Activated T-helper 2 cell treated with anti-CD3 and anti-CD28 coated beads, Interferon-gamma antibody, Interleukin-2, Interleukin-4, amounts not matched to agents 10 μg/mL and 5 μg/mL and 100 μg/mL, durations not matched to agents 14 hours and 24 hours and 36 hours (primary cell): ENCODE measurements at regions of chr9 and their contacts with region 1.

Region 1: DNA sequence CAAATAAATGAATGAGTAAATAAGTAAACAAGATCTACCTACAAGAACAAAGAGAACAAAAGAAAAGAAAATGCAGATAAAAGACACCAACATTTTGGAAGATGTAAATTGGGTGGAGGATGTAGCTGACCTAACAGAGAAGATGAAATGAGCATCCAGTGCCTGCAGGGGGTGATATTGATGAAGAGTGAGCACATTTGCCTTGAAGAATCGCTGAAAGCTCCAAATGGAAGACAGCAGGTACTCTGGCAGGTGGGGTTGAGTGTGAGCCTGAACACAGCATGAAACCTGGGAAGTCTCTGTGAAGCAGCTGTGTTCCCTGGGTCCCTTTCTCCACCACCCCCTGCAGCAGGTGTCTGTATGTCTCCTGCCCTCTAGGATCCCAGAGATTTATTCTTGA is 125.6 kb downstream of the NXNL2 start:
- DNase-seq: no peak
- H3K4me3 Mint-ChIP-seq: no peak overlapping the region
- H3K27ac Mint-ChIP-seq: no peak overlapping the region
- H3K4me1 Mint-ChIP-seq: no peaks in the 10 kb centered on the region
- H3K27me3 Mint-ChIP-seq: peaks cover 4% of the 10 kb centered on the region

Region 2: DNA sequence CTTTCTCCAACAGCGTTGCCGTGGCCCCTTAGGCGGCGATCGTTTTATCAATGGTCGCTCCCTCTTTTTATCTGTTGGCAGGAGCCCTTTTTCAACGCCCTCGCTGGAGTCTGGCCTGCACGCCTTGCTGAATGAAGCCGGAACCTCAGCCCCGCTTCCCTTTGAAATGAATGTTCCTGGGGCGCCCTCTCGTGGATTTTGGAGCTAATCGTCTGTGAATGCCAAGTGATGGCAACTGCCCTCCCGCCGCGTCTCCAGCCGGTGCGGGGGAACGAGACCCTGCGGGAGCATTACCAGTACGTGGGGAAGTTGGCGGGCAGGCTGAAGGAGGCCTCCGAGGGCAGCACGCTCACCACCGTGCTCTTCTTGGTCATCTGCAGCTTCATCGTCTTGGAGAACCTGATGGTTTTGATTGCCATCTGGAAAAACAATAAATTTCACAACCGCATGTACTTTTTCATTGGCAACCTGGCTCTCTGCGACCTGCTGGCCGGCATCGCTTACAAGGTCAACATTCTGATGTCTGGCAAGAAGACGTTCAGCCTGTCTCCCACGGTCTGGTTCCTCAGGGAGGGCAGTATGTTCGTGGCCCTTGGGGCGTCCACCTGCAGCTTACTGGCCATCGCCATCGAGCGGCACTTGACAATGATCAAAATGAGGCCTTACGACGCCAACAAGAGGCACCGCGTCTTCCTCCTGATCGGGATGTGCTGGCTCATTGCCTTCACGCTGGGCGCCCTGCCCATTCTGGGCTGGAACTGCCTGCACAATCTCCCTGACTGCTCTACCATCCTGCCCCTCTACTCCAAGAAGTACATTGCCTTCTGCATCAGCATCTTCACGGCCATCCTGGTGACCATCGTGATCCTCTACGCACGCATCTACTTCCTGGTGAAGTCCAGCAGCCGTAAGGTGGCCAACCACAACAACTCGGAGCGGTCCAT is 340.6 kb after region 1 on chr9:
- intact Hi-C with region 1: loop called (anchors 2 kb)
- DNase-seq: peak; percentile 65
- H3K4me3 Mint-ChIP-seq: no peak overlapping the region
- H3K27ac Mint-ChIP-seq: no peak overlapping the region
- H3K4me1 Mint-ChIP-seq: peaks cover 2% of the 10 kb centered on the region
- H3K27me3 Mint-ChIP-seq: no peaks in the 10 kb centered on the region